SK-N-SH (cell line): ENCODE measurements at regions of chr4 and their contacts with region 1.

Region 1: DNA sequence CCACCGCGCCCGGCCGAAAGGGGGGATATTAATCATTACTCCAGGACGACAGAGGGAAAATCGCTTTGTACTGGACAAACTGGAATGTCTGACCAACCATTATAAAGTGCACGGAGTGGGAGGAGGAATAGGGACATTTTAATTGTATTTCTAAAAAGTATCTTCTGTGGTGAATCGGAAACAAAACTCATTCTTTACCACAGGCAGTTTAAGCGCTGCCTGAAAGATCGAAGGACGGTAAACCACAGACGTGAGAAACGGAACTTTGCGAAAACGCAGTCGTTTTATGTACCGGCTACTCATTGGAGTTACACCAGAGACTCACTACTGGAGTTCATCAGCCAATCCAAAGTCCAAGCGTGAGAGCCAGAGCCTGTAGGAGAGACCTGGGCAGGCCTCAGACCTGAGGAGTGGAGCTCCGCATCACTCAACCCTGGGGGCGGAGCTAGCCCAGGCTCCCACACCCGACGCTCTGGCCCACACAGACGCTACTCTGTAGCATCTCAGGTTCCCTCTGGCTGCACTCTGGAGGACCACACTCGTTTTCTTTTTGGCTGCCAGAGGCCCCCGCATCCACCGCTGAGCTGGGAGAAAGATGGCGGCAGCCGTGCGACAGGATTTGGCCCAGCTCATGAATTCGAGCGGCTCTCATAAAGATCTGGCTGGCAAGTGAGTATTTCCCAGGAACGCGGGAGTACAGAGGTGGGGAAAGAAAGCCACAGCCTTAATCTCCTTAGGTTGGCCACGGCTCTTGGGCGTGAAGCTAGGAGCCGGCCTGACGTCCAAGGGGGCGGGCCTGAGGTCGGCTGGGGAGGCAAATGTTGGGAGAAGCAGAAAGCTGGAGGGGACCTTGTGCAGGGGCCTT is at the start of gene COPS4:
- DNase-seq: peak; percentile 91
- H3K4me3 ChIP-seq: peak within 1 kb of the TSS; percentile 84 to 89
- H3K27ac ChIP-seq: peak within 1 kb of the TSS; percentile 92 to 96
- H3K4me1 ChIP-seq: peaks cover 0 to 12% of the 10 kb centered on the region in 2 experiments; a peak in 2 of 4 replicates
- H3K27me3 ChIP-seq: no peaks in the 10 kb centered on the region
- CTCF ChIP-seq: no peak
- EP300 ChIP-seq: peak in 1 of 2 experiments; percentile 18; a peak in 1 of 4 replicates
- RAD21 ChIP-seq: no peak
- polyA plus RNA-seq, gene COPS4: 32.2 and 33.9 TPM in 2 replicates

Region 2: GRCh38 chr4:82900331-82901128 is 134.3 kb before region 1 on chr4 and contains the start of gene THAP9:
- CTCF ChIA-PET with region 1: no interaction called
- POLR2A ChIA-PET with region 1: interaction called, 11 read pairs
- DNase-seq: peak; percentile 90
- H3K4me3 ChIP-seq: peak within 1 kb of the TSS; percentile 81 to 97
- H3K27ac ChIP-seq: peak within 1 kb of the TSS; percentile 96 to 98
- H3K4me1 ChIP-seq: peaks cover 5 to 8% of the 10 kb centered on the region in 2 experiments; a peak in 3 of 4 replicates
- H3K27me3 ChIP-seq: no peaks in the 10 kb centered on the region
- CTCF ChIP-seq: no peak
- EP300 ChIP-seq: no peak; a peak in 1 of 4 replicates
- RAD21 ChIP-seq: no peak; the same call in 1 of the 2 replicates
- polyA plus RNA-seq, gene THAP9: 1.5 and 1.6 TPM in 2 replicates

Region 3: DNA sequence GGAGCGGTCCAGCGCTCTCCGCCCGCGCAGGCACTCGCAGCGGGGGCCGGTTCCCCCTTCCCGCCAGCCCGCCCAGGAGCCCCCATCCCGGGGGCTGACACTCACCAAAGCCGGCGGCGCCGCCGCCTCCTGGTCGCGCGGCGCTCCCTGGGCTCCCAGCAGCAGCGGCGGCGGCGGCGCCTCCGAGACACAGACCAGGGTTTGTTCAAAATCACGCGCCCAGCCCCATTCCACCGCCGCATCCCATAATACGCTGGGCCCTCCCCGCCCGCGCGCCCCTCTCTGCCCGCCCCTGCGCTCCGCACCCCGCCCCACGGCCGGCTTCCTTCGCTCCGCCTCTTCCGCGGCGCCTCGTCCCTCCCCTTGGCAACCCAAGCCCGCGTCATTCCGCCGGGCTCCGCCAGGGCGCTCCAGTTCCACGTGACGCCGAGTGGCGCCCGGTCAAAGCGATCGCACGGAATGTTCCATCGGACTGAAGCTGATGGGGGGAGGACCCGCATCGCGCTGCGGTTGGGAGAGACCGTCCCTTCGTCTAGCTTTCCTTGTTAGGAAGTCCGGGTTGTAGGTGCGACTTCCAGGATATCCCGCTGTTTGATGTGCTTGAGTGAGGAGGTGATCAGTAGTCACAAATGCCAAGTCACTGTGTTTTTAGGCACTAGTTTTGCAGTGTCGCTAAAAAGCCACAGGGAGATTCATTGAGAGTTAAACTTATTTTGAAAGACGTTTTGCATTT is 22.0 kb before region 1 on chr4:
- CTCF ChIA-PET with region 1: interaction called, 6 read pairs
- POLR2A ChIA-PET with region 1: interaction called, 34 read pairs
- DNase-seq: peak; percentile 96
- H3K4me3 ChIP-seq: peak overlapping the region; percentile 88 to 95
- H3K27ac ChIP-seq: peak overlapping the region; percentile 82 to 92
- H3K4me1 ChIP-seq: peaks cover 4 to 10% of the 10 kb centered on the region in 2 experiments; a peak in 2 of 4 replicates
- H3K27me3 ChIP-seq: no peaks in the 10 kb centered on the region
- CTCF ChIP-seq: peak; percentile 44
- EP300 ChIP-seq: no peak; a peak in 1 of 4 replicates
- RAD21 ChIP-seq: peak; percentile 45